ENCODE measurements at regions of chr11 and their contacts with region 1.

Region 1: DNA sequence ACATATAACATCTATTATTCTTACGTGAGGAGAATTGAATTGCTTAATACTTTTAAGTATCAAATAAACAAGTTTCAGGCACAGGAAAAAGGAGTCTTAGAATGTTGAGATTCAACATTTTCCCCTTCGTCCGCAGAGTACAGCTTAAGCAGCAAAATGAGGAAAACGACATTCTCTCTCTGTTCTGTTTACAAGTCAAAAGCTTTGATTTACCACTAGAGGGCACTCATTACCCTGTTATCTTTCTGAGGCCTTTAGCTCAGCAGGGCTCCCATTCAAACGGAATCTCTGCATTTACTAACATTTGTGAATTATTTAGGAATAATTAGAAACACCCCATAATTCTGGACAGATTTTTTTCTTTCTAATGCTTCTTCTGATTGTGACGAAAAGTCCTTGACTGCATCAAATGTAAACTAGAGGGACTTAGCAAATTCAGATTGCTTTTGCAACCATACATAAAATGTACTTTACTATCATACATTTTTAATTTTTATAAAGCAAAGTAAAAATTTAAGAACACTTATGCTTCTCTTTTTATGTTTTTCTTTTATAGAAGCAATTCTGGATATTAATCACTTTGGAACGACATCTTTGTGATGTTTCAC is 75.0 kb downstream of the JRKL start:
- DNase-seq: peak; percentile 61
- H3K4me3 ChIP-seq: peak overlapping the region in 1 of 2 experiments; percentile 58; a peak in 1 of 4 replicates
- H3K27ac ChIP-seq: no peak overlapping the region
- H3K4me1 ChIP-seq: no peaks in the 10 kb centered on the region; a peak in 1 of 4 replicates
- H3K27me3 ChIP-seq: peaks cover 12% of the 10 kb centered on the region
- CTCF ChIP-seq: peak; percentile 81
- EP300 ChIP-seq: no peak
- RAD21 ChIP-seq: peak; percentile 96

Region 2: GRCh38 chr11:96412761-96413381 is 51.9 kb before region 1 on chr11:
- CTCF ChIA-PET with region 1: no interaction called
- POLR2A ChIA-PET with region 1: no interaction called
- DNase-seq: no peak
- H3K4me3 ChIP-seq: no peak overlapping the region
- H3K27ac ChIP-seq: no peak overlapping the region
- H3K4me1 ChIP-seq: no peaks in the 10 kb centered on the region
- H3K27me3 ChIP-seq: no peaks in the 10 kb centered on the region; the same call in 1 of the 2 replicates
- CTCF ChIP-seq: no peak
- EP300 ChIP-seq: no peak
- RAD21 ChIP-seq: no peak

Region 3: GRCh38 chr11:96447208-96448110 is 17.3 kb before region 1 on chr11:
- CTCF ChIA-PET with region 1: interaction called, 65 read pairs
- POLR2A ChIA-PET with region 1: no interaction called
- DNase-seq: no peak
- H3K4me3 ChIP-seq: no peak overlapping the region
- H3K27ac ChIP-seq: peak overlapping the region in 1 of 2 experiments; percentile 55; a peak in 2 of 4 replicates
- H3K4me1 ChIP-seq: peaks cover 0 to 8% of the 10 kb centered on the region in 2 experiments; a peak in 2 of 4 replicates
- H3K27me3 ChIP-seq: peaks cover 5% of the 10 kb centered on the region; the same call in 1 of the 2 replicates
- CTCF ChIP-seq: no peak
- EP300 ChIP-seq: no peak
- RAD21 ChIP-seq: no peak

Region 4: GRCh38 chr11:96554236-96554820 is 89.5 kb after region 1 on chr11:
- CTCF ChIA-PET with region 1: no interaction called
- POLR2A ChIA-PET with region 1: no interaction called
- DNase-seq: no peak
- H3K4me3 ChIP-seq: no peak overlapping the region
- H3K27ac ChIP-seq: no peak overlapping the region
- H3K4me1 ChIP-seq: no peaks in the 10 kb centered on the region
- H3K27me3 ChIP-seq: no peaks in the 10 kb centered on the region
- CTCF ChIP-seq: no peak
- EP300 ChIP-seq: no peak
- RAD21 ChIP-seq: no peak

Region 5: DNA sequence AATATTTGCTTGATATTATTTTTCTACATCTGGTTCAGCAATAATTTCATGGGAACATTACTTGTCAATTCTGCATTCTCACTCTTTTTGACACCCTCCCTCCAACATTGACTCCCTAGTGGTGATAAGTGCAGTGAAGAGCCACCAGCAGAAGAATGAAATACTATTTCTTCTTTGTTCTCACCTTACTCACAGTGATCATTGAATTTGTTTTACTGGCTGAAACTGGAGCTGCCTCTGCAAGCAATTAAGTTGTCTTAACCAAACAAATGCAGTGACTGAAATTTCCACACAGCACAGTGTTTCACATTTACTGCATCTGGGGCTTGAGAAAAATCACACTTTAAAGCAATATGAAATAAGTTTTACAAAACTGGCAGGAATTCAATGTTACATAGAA is 114.9 kb after region 1 on chr11:
- CTCF ChIA-PET with region 1: no interaction called
- POLR2A ChIA-PET with region 1: no interaction called
- DNase-seq: no peak
- H3K4me3 ChIP-seq: no peak overlapping the region
- H3K27ac ChIP-seq: no peak overlapping the region
- H3K4me1 ChIP-seq: no peaks in the 10 kb centered on the region; a peak in 2 of 4 replicates
- H3K27me3 ChIP-seq: no peaks in the 10 kb centered on the region
- CTCF ChIP-seq: no peak
- EP300 ChIP-seq: no peak
- RAD21 ChIP-seq: no peak

Region 6: GRCh38 chr11:96794152-96794551 is 329.3 kb after region 1 on chr11:
- CTCF ChIA-PET with region 1: interaction called, 29 read pairs
- POLR2A ChIA-PET with region 1: no interaction called
- DNase-seq: no peak
- H3K4me3 ChIP-seq: no peak overlapping the region
- H3K27ac ChIP-seq: no peak overlapping the region
- H3K4me1 ChIP-seq: no peaks in the 10 kb centered on the region
- H3K27me3 ChIP-seq: no peaks in the 10 kb centered on the region
- CTCF ChIP-seq: peak; percentile 30
- EP300 ChIP-seq: no peak
- RAD21 ChIP-seq: peak; percentile 43

Region 7: DNA sequence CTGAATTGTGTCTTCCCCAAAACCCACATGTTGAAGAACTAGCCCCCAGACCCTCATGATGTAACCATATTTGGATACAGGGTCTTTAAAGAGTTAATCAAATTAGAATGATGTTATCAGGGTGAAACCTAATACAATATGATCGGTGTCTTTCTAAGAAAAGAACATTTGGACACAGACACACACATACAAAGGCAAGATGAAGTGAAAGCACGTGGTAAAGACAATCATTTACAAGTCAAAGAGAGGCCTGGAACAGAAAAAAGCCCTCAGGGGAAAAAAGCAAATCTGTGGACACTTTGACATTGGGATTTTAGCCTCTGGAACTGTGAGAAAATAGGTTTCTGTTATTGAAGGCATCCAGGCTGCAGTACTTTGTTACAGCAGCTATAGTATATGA is 658.4 kb after region 1 on chr11:
- CTCF ChIA-PET with region 1: interaction called, 16 read pairs
- POLR2A ChIA-PET with region 1: no interaction called
- DNase-seq: no peak
- H3K4me3 ChIP-seq: no peak overlapping the region
- H3K27ac ChIP-seq: no peak overlapping the region
- H3K4me1 ChIP-seq: no peaks in the 10 kb centered on the region
- H3K27me3 ChIP-seq: no peaks in the 10 kb centered on the region
- CTCF ChIP-seq: no peak
- EP300 ChIP-seq: no peak
- RAD21 ChIP-seq: no peak

Region 8: GRCh38 chr11:97158243-97158642 is 693.4 kb after region 1 on chr11:
- CTCF ChIA-PET with region 1: interaction called, 11 read pairs
- POLR2A ChIA-PET with region 1: no interaction called
- DNase-seq: no peak
- H3K4me3 ChIP-seq: no peak overlapping the region
- H3K27ac ChIP-seq: no peak overlapping the region
- H3K4me1 ChIP-seq: no peaks in the 10 kb centered on the region
- H3K27me3 ChIP-seq: no peaks in the 10 kb centered on the region
- CTCF ChIP-seq: no peak
- EP300 ChIP-seq: no peak
- RAD21 ChIP-seq: no peak